Activated CD4-positive, alpha-beta memory T cell treated with anti-CD3 and anti-CD28 coated beads, Interleukin-2, amount 10 ng/mL, durations not matched to agents 7 days and 5 days (primary cell): ENCODE measurements at regions of chr22 and their contacts with region 1.

Region 1: DNA sequence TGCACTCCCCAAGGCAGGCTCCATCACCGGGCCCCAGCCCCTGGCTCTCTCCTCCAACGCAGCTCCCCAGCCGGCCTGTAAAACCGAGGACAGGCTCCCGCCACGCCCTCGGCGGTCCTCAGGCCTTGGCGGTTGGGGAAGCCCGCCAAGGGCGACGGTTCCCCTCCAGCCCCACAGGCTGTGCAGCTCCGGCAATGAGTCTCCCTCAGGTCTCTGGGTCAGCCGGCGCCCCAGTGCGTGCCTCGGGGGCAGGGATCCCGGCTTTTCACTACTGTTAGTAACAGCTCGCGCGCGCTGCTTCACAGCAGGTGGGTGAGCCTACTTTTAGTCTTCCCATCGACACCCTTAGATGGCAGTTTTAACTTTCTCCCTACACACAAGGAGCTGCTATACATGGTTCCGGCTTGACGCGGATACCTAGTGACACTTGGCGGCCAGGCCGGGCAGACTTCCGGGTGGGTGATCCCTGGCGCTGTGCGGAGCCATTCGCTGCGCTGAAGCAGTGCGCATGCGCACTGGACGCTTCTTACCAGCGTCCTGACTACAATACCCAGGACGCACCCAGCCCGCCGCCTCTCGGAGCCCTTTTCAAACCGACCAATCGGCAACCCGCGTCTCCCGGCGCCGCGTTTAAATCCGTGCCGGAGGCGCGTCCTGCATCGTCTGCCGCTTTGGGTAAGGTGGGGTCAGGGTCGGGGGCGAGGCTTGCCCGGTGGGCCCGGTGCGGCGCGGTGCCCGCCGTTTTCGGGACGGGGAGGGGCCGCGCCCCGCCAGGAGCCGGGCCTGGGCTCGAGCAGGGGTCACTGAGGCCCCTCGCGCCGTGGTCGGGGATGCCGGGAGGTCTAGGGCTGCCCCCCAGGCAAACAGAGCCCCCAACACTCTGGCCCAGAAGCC is at the start of gene GTSE1:
- DNase-seq: peak; percentile 99
- H3K4me3 Mint-ChIP-seq: peak within 1 kb of the TSS; percentile 88
- H3K27ac Mint-ChIP-seq: peak within 1 kb of the TSS; percentile 97
- H3K4me1 Mint-ChIP-seq: peaks cover 63% of the 10 kb centered on the region
- H3K27me3 Mint-ChIP-seq: no peaks in the 10 kb centered on the region
- total RNA-seq, gene GTSE1: 67.6 to 76.2 TPM

Region 2: GRCh38 chr22:46122511-46122971 is 174.0 kb before region 1 on chr22:
- CTCF ChIA-PET with region 1: interaction called, 16 read pairs
- POLR2A ChIA-PET with region 1: interaction called, 4 read pairs
- DNase-seq: peak; percentile 73
- H3K4me3 Mint-ChIP-seq: no peak overlapping the region
- H3K27ac Mint-ChIP-seq: no peak overlapping the region
- H3K4me1 Mint-ChIP-seq: no peaks in the 10 kb centered on the region
- H3K27me3 Mint-ChIP-seq: no peaks in the 10 kb centered on the region

Region 3: GRCh38 chr22:46250035-46250782 is 46.3 kb before region 1 on chr22 and contains the start of gene CDPF1:
- CTCF ChIA-PET with region 1: interaction called, 8 read pairs
- POLR2A ChIA-PET with region 1: interaction called, 48 read pairs
- DNase-seq: peak; percentile 92
- H3K4me3 Mint-ChIP-seq: peak within 1 kb of the TSS; percentile 73
- H3K27ac Mint-ChIP-seq: peak within 1 kb of the TSS; percentile 80
- H3K4me1 Mint-ChIP-seq: peaks cover 43% of the 10 kb centered on the region
- H3K27me3 Mint-ChIP-seq: peaks cover 4% of the 10 kb centered on the region
- total RNA-seq, gene CDPF1: 9.6 to 11.8 TPM

Region 4: GRCh38 chr22:46280999-46281623 is 15.4 kb before region 1 on chr22:
- CTCF ChIA-PET with region 1: interaction called, 5 read pairs
- POLR2A ChIA-PET with region 1: interaction called, 25 read pairs
- DNase-seq: no peak
- H3K4me3 Mint-ChIP-seq: no peak overlapping the region
- H3K27ac Mint-ChIP-seq: peak overlapping the region; percentile 47
- H3K4me1 Mint-ChIP-seq: peaks cover 17% of the 10 kb centered on the region
- H3K27me3 Mint-ChIP-seq: no peaks in the 10 kb centered on the region

Region 5: DNA sequence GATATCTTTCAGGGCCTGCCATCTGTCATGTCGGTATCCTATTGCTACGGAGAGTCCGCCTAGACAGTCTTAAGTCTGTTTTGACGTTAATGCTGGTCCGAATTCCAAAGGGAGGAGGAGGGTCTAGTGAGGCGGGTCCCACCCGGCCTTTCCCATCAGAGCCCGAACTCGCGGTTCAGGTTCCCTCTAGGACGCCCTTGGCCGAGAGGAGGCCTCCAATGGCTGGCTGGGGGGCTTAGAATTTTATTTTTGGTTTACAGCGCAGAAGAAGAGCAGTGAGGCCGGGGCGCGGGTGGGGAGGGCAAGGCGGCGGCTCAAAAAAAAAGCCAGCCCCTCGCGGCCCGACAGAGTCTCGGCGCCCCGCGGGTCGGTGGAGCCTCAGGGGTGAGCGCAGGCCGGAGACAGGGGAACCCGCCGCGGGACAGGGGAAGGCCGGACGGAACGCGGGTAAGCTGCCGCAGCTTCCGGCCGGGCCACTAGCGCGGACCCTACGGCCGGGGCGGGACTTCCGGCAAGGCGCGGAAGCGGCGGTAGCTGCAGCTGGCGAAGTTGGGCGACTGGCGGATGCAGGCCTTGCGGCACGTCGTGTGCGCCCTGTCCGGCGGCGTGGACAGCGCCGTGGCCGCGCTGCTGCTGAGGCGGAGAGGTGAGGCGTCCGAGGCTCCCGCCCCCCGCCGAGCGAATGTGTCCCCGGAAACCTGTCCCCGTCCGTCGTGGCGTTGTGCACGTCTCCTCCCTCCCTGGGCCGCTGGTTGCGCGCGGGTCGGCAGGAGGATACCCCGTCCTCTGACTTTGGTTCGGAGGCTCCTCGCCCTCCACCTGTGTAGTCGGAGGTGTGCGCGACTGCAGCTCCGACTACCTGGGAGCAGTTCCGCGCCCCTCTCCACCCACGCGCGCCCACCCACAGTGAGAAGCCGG is 39.0 kb after region 1 on chr22 and contains the start of gene TRMU:
- CTCF ChIA-PET with region 1: interaction called, 5 read pairs
- POLR2A ChIA-PET with region 1: interaction called, 16 read pairs
- DNase-seq: peak; percentile 81
- H3K4me3 Mint-ChIP-seq: peak within 1 kb of the TSS; percentile 92
- H3K27ac Mint-ChIP-seq: peak within 1 kb of the TSS; percentile 86
- H3K4me1 Mint-ChIP-seq: peaks cover 33% of the 10 kb centered on the region
- H3K27me3 Mint-ChIP-seq: no peaks in the 10 kb centered on the region
- total RNA-seq, gene TRMU: 66.8 to 71.7 TPM